ENCODE measurements at regions of chr12 and their contacts with region 1.

Region 1: GRCh38 chr12:89709157-89709994 is 738 bp upstream of the ATP2B1 start:
- DNase-seq: peak; percentile 99
- H3K4me3 ChIP-seq: peak overlapping the region; percentile 80 to 97 (median 90)
- H3K27ac ChIP-seq: peak overlapping the region; percentile 95
- H3K4me1 ChIP-seq: peaks cover 5% of the 10 kb centered on the region
- H3K27me3 ChIP-seq: no peaks in the 10 kb centered on the region
- CTCF ChIP-seq: no peak

Region 2: DNA sequence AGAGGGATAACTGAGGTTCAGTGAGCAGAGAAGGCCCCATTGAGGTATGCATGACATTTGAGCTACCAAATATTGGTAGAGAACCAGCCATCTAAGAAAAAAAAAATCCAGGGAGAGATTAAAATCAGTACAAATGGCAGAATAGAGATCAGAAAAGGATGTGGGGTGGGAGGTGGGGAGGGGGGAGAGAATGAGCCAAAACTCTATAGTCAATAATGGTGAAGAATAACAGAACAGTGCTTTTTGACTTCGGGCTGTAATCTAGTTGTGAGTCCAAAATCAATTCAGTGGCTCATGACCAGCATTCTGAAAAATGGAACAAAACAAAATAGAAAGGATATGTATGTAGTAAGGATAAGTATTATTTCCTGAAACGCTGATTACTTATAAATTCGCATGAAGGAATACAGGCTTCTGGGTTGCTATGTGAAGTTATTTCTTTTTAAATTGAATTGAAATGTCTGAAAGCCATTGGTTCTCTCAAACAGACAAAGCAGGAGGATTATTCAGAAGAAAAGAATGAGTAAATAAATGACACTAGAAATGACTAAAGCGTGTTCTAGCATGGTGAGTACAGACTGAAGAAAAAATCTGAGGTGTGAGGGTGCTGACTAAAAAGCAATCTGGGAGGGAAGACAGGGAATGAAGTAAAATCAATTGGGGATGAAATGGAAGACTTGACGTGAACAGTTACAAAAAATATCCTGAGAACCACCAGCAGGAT is 73.2 kb before region 1 on chr12:
- CTCF ChIA-PET with region 1: no interaction called
- dilution Hi-C with region 1: no loop called
- in situ Hi-C with region 1: no loop called
- intact Hi-C with region 1: loop called (anchors 5 kb)
- DNase-seq: peak; percentile 64
- H3K4me3 ChIP-seq: no peak overlapping the region
- H3K27ac ChIP-seq: no peak overlapping the region
- H3K4me1 ChIP-seq: peaks cover 12% of the 10 kb centered on the region
- H3K27me3 ChIP-seq: no peaks in the 10 kb centered on the region
- CTCF ChIP-seq: no peak

Region 3: GRCh38 chr12:89663577-89664357 is 45.6 kb before region 1 on chr12:
- CTCF ChIA-PET with region 1: no interaction called
- dilution Hi-C with region 1: no loop called
- in situ Hi-C with region 1: no loop called
- intact Hi-C with region 1: no loop called
- DNase-seq: peak; percentile 44
- H3K4me3 ChIP-seq: no peak overlapping the region
- H3K27ac ChIP-seq: no peak overlapping the region
- H3K4me1 ChIP-seq: peaks cover 11% of the 10 kb centered on the region
- H3K27me3 ChIP-seq: no peaks in the 10 kb centered on the region
- CTCF ChIP-seq: no peak

Region 4: GRCh38 chr12:89756585-89757321 is 47.4 kb after region 1 on chr12:
- CTCF ChIA-PET with region 1: no interaction called
- dilution Hi-C with region 1: no loop called
- in situ Hi-C with region 1: no loop called
- intact Hi-C with region 1: loop called (anchors 1 kb)
- DNase-seq: peak; percentile 99
- H3K4me3 ChIP-seq: no peak overlapping the region
- H3K27ac ChIP-seq: peak overlapping the region; percentile 99
- H3K4me1 ChIP-seq: peaks cover 18% of the 10 kb centered on the region
- H3K27me3 ChIP-seq: no peaks in the 10 kb centered on the region
- CTCF ChIP-seq: no peak

Region 5: GRCh38 chr12:89893972-89894706 is 184.8 kb after region 1 on chr12:
- CTCF ChIA-PET with region 1: no interaction called
- dilution Hi-C with region 1: no loop called
- in situ Hi-C with region 1: no loop called
- intact Hi-C with region 1: loop called (anchors 1 kb)
- DNase-seq: peak; percentile 48
- H3K4me3 ChIP-seq: no peak overlapping the region
- H3K27ac ChIP-seq: no peak overlapping the region
- H3K4me1 ChIP-seq: peaks cover 14% of the 10 kb centered on the region
- H3K27me3 ChIP-seq: no peaks in the 10 kb centered on the region
- CTCF ChIP-seq: no peak

Region 6: DNA sequence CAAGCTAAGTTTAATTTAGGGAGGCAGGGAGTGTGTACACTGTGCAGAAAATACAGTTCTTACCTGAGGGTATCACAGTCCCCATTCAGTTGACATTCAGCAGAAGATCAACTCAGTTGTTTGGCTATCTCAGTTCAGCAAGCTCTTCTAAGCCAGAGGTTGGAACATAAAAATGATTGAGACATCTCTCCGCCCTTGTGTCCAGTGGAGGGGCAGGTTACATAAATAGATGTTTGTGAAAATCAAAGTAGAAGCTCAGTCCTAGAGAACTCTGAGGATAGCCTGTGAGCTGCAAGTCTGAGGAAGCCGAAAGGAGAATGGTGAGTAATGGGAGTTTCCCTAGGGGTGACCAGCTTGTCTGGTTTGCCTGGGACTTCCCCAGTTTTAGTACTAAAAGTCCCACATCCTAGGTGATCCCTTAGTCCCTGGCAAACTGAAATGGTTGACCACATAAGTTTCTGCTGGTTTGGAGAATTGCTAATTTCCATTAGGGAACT is 250.7 kb after region 1 on chr12:
- CTCF ChIA-PET with region 1: no interaction called
- dilution Hi-C with region 1: no loop called
- in situ Hi-C with region 1: no loop called
- intact Hi-C with region 1: loop called (anchors 5 kb)
- DNase-seq: peak; percentile 95
- H3K4me3 ChIP-seq: no peak overlapping the region
- H3K27ac ChIP-seq: peak overlapping the region; percentile 41
- H3K4me1 ChIP-seq: peaks cover 13% of the 10 kb centered on the region
- H3K27me3 ChIP-seq: no peaks in the 10 kb centered on the region
- CTCF ChIP-seq: no peak

Region 7: GRCh38 chr12:90102957-90103652 is 393.7 kb after region 1 on chr12:
- CTCF ChIA-PET with region 1: no interaction called
- dilution Hi-C with region 1: no loop called
- in situ Hi-C with region 1: no loop called
- intact Hi-C with region 1: loop called (anchors 1 kb)
- DNase-seq: peak; percentile 43
- H3K4me3 ChIP-seq: no peak overlapping the region
- H3K27ac ChIP-seq: no peak overlapping the region
- H3K4me1 ChIP-seq: peaks cover 20% of the 10 kb centered on the region
- H3K27me3 ChIP-seq: no peaks in the 10 kb centered on the region
- CTCF ChIP-seq: peak; percentile 44 to 75